ENCODE measurements at regions of chr6 and their contacts with region 1.

Region 1: DNA sequence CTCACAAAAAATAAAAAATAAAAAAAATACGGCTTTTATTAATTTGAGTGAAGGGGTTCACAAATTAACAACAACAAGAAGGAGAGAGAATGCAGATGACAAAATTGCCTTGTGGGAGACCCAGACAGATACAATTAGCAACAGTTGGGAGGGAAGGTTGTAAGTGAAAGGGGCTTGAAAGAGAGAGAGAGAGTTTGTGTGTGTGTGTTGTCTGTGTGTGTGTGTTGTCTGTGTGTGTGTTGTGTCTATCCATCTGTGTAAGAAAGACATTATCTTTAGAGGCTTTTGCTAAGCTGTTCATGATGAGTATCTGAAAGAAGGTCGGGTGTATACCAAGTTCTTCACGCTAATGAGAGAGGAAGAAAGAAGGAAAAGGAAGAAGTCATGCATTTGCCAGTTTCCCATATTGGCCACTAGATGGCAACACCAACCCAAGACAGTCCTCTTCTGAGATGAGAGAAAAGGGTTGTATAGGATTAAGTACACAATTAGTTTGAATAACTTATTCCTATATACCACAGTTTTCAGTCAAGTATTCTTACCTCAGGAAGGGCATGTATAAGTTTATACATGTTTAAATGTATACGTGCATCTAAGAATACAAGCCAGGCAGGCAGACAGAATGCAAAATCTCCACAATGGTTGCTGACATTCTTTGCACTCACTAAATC is 63.7 kb upstream of the CD2AP start:
- DNase-seq: peak; percentile 59
- ATAC-seq: peak; percentile 83
- H3K4me3 Mint-ChIP-seq: peak overlapping the region; percentile 73
- H3K27ac Mint-ChIP-seq: peak overlapping the region; percentile 90
- H3K4me1 Mint-ChIP-seq: peaks cover 22% of the 10 kb centered on the region
- H3K27me3 Mint-ChIP-seq: peaks cover 11% of the 10 kb centered on the region

Region 2: DNA sequence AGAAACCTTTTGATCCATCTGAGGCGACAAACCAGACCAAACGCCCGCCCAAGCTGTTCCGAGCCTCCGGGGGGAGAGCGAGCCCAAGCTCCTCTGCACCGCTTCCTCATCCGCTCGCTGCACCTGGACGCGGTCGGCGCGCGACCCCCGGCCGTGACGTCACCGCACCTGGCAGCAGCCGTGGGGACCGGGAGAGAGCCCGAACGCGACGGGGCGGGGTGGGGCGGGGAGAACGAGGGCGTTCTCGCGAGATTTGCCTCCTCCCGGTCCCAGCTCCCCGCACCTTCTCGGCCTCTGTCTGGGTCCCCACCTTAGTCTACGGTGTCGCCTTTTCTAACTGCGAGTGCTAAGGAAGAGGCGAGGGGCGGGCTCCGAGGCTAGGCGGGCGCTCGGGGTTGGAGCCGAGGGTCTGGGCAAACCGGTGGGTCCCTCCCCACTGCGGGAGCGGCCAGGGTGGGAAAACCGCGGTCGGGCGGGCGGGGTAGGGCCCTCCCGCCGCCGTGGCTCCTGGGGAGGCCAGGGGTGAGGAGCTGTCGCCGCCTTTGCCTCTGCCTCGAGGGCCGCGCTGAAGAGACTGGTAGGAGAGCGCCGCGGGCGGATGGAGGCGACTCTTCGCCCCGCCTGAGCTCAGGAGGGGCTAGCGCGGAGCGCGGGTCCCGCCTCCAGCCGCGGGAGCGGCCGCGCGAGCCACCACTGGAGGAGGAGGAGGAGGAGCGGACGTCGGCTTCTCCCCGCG is 63.8 kb after region 1 on chr6 and contains the start of gene CD2AP:
- CTCF ChIA-PET with region 1: interaction called, 33 read pairs
- DNase-seq: peak; percentile 94
- ATAC-seq: peak; percentile 89
- H3K4me3 Mint-ChIP-seq: peak within 1 kb of the TSS; percentile 94
- H3K27ac Mint-ChIP-seq: peak within 1 kb of the TSS; percentile 93
- H3K4me1 Mint-ChIP-seq: peaks cover 28% of the 10 kb centered on the region
- H3K27me3 Mint-ChIP-seq: no peaks in the 10 kb centered on the region
- total RNA-seq, gene CD2AP: 25.5 to 30.9 TPM

Region 3: DNA sequence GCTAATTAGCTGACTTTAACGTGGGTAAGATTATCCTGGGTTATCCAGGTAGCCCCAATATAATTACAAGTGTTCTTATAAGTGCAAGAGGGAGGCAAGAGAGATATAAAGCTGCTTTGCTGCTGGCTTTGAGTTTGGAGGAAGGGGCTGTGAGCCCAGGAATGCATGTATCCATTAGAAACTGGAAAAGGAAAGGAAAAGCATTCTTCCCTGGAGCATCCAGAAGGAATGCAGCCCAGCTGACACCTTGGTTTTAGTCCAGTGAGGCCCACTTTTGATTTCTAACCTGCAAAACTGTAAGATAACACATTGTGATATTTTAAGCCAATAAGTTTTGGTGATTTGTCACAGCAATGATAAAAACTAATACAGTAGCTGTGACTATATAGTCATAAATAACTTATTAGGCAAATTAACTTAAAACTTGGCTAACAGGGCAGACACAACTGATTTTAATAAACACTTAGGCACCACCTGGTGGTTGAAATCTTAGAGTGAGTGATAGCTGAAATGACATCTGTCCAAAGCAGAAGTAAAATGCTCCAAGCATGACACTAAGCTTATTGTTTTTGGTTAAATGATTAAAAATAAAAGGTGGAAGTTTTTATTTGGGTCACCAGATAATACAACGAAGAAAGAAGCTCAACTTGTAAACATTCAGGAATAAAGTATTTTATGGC is 320.1 kb after region 1 on chr6:
- CTCF ChIA-PET with region 1: interaction called, 18 read pairs
- DNase-seq: no peak
- ATAC-seq: no peak
- H3K4me3 Mint-ChIP-seq: no peak overlapping the region
- H3K27ac Mint-ChIP-seq: no peak overlapping the region
- H3K4me1 Mint-ChIP-seq: no peaks in the 10 kb centered on the region
- H3K27me3 Mint-ChIP-seq: peaks cover 9% of the 10 kb centered on the region

Region 4: DNA sequence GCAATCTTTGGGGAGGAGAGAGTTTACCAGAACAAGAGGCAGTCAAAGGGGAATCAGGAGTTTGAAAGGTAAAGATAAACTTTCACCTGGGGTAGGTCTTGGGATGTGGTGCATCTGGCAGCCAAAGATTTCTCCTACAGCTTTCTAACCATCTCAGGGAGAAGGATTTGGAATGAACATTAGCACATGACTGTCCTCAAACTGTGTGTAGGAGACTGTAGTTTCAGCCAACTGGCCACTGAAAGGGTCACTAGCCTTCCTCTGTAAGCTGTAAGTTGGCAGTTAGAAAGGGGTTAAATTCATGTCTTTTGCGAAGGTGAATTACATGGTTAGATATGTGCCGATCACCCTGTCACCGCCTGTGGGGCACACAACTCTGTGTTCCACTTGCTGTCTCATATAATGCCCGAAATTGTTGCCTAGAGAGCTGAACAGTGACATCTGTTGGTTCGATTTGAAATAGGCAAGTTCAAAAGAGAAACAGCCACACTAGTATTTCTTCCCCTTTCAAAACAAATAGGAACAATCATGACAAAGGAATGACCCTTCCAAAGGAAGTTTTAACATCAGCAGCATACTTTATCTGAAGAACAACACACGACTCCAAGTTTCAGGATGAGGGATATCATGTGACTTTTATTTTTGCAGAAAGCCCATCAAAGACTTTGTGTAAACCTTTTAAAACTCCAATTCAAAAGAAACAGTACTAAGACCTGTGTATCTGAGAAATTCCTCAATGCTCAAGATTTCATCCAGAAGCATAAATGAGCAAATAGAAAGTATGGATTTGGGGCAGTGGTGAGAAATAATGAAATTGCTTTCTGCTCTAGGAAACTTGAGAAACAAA is 366.8 kb after region 1 on chr6:
- CTCF ChIA-PET with region 1: interaction called, 18 read pairs
- DNase-seq: peak; percentile 53
- ATAC-seq: peak; percentile 93
- H3K4me3 Mint-ChIP-seq: no peak overlapping the region
- H3K27ac Mint-ChIP-seq: no peak overlapping the region
- H3K4me1 Mint-ChIP-seq: peaks cover 9% of the 10 kb centered on the region
- H3K27me3 Mint-ChIP-seq: peaks cover 19% of the 10 kb centered on the region